ENCODE measurements at regions of chr7 and their contacts with region 1.

Region 1: GRCh38 chr7:44240983-44241510 is 40.3 kb downstream of the YKT6 start:
- DNase-seq: peak; percentile 88
- H3K4me3 Mint-ChIP-seq: peak overlapping the region; percentile 32
- H3K27ac Mint-ChIP-seq: no peak overlapping the region
- H3K4me1 Mint-ChIP-seq: peaks cover 8% of the 10 kb centered on the region
- H3K27me3 Mint-ChIP-seq: peaks cover 78% of the 10 kb centered on the region
- CTCF ChIP-seq: peak; percentile 86

Region 2: GRCh38 chr7:44307301-44307900 is 66.4 kb after region 1 on chr7:
- CTCF ChIA-PET with region 1: interaction called, 15 read pairs
- intact Hi-C with region 1: loop called (anchors 2 kb)
- DNase-seq: peak; percentile 74
- H3K4me3 Mint-ChIP-seq: no peak overlapping the region
- H3K27ac Mint-ChIP-seq: no peak overlapping the region
- H3K4me1 Mint-ChIP-seq: no peaks in the 10 kb centered on the region
- H3K27me3 Mint-ChIP-seq: peaks cover 85% of the 10 kb centered on the region
- CTCF ChIP-seq: peak; percentile 54

Region 3: GRCh38 chr7:44375236-44375699 is 134.2 kb after region 1 on chr7:
- CTCF ChIA-PET with region 1: interaction called, 3 read pairs
- intact Hi-C with region 1: loop called (anchors 10 kb)
- DNase-seq: peak; percentile 59
- H3K4me3 Mint-ChIP-seq: no peak overlapping the region
- H3K27ac Mint-ChIP-seq: peak overlapping the region; percentile 40
- H3K4me1 Mint-ChIP-seq: peaks cover 33% of the 10 kb centered on the region
- H3K27me3 Mint-ChIP-seq: no peaks in the 10 kb centered on the region
- CTCF ChIP-seq: peak; percentile 59

Region 4: DNA sequence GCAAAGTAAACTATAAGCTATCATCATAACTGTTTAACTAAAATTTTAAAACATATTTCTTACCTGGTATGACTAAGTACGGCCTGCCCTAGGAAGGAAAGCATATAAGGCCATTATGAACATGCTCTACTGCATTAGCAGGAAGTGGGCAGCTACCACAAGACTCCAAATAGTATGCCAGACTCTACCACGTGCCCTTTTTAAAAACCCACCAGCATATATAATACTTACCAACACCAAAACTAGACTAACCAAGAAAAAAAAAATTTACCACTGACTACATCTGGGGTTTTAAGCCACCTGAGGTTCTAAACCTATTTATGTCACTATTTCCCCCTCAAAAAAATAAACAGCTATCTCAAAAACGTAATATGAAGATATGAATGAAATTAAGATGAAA is 219.3 kb after region 1 on chr7:
- CTCF ChIA-PET with region 1: no interaction called
- intact Hi-C with region 1: loop called (anchors 5 kb)
- DNase-seq: peak; percentile 17
- H3K4me3 Mint-ChIP-seq: no peak overlapping the region
- H3K27ac Mint-ChIP-seq: peak overlapping the region; percentile 76
- H3K4me1 Mint-ChIP-seq: peaks cover 23% of the 10 kb centered on the region
- H3K27me3 Mint-ChIP-seq: no peaks in the 10 kb centered on the region
- CTCF ChIP-seq: no peak

Region 5: DNA sequence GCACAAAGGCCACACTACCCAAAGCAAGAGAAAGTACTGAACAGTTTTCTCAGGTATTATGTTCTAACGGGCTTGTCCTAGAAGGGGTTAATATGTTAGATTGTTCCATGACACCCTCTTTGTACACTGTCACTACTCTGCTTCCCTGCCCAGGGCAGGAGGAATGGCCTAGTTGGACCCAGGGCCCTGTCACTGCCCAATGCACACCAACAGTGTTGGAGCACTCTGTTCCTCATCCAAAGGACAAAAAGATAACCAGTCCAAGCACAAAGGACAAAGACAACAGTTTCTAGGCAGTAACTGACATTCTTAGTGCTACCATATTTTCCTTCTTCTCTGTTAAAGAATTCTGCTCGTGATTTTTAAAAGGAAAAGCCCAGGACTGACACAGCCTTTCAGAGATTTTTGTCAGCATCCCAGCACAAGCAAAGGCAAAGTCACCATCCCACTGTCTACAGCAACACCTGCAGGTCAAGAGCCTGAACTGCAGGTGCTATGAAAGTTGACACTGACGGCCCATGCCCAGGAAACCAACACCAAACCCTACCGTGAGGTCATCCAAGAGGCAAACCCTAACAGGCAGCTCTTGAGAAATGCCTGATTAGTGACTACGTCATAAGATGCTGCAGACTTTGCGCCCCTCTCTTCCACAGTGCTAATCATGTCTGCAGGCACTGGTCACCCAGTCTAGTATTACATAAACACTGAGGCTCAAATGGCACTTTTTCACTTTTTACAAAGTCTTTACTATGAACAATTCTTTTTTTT is 236.2 kb after region 1 on chr7:
- CTCF ChIA-PET with region 1: interaction called, 7 read pairs
- intact Hi-C with region 1: loop called (anchors 1 kb)
- DNase-seq: peak; percentile 77
- H3K4me3 Mint-ChIP-seq: no peak overlapping the region
- H3K27ac Mint-ChIP-seq: no peak overlapping the region
- H3K4me1 Mint-ChIP-seq: peaks cover 34% of the 10 kb centered on the region
- H3K27me3 Mint-ChIP-seq: no peaks in the 10 kb centered on the region
- CTCF ChIP-seq: peak; percentile 96